Esophagus muscularis mucosa (tissue), 4 donors: ENCODE measurements at regions of chr3 and their contacts with region 1.

Region 1: DNA sequence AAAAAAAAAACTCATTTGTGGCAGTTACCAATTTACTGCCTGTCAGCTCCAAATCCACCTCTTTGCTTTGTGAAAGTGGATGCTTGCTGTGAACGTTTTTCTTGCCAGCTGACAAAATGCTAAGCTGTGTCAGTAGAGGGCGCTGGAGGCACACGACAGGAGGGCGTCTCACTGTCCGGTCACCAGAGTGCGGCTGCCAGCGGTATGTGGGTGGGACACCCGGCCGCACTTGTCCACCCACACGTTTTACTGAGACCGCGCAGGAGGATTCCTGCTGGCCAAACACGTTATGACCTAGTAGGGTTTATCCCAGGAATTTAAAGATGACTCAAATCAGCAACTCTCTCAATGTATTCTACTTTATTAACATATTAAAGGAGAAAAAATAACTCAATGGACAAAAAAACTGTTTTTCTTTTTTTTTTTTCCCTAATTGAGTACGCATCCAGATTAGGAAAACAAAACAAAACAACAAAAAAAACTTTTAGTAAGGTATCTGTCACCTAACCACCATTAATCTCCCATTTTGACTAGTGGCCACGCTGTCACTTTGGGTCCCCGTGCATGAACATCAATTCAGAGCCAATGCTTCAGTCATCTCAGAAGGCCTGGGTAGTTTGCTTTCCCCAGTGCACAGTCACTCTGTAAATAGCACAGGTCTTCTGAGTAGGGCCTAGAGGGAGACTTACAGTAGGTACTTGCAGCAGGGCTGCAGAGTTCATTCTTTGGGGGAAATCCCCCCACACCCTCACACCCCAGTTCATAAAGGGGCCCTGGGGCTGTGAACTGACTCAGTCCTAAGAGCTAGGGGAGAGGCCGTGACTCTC is 43.8 kb upstream of the RPL35A start:
- DNase-seq: peak; percentile 97
- H3K4me3 ChIP-seq: no peak overlapping the region
- H3K27ac ChIP-seq: peak overlapping the region in 3 of 4 donors; percentile 21 to 52 (median 43)
- H3K4me1 ChIP-seq: peaks cover 0 to 13% (median 11%) of the 10 kb centered on the region in 4 donors
- H3K27me3 ChIP-seq: no peaks in the 10 kb centered on the region
- CTCF ChIP-seq: peak; percentile 90 to 96 (median 92)
- EP300 ChIP-seq: no peak
- POLR2A ChIP-seq: no peak

Region 2: DNA sequence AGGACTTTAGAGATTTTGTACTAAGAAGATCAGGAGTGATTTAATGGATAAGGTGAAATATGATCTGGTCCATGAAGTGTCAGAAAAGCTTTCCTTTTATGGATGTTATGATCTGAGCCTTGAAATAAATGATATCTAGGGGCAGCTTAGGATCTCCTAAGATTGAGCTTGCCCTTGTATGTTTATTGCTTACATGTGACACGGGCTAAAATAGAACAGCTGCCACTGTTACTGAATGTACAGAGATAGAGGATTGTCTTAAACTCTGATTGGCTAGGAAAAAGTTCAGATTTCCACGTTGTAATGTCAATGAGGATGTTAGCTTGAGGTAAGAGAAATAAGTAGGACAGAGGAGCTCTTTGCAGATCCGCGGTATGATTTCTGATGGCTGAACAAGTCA is 147.7 kb before region 1 on chr3:
- intact Hi-C with region 1: no loop called
- DNase-seq: no peak
- H3K4me3 ChIP-seq: no peak overlapping the region
- H3K27ac ChIP-seq: no peak overlapping the region
- H3K4me1 ChIP-seq: peaks cover 0 to 17% (median 12%) of the 10 kb centered on the region in 4 donors
- H3K27me3 ChIP-seq: no peaks in the 10 kb centered on the region
- CTCF ChIP-seq: no peak
- EP300 ChIP-seq: no peak
- POLR2A ChIP-seq: no peak

Region 3: GRCh38 chr3:197942956-197943556 is 36.8 kb after region 1 on chr3:
- intact Hi-C with region 1: loop called (anchors 1 kb)
- DNase-seq: no peak
- H3K4me3 ChIP-seq: no peak overlapping the region
- H3K27ac ChIP-seq: no peak overlapping the region
- H3K4me1 ChIP-seq: no peaks in the 10 kb centered on the region
- H3K27me3 ChIP-seq: no peaks in the 10 kb centered on the region
- CTCF ChIP-seq: peak; percentile 57 to 79 (median 62)
- EP300 ChIP-seq: no peak
- POLR2A ChIP-seq: no peak